WTC11 (cell line): ENCODE measurements at regions of chr2 and their contacts with region 1.

Region 1: GRCh38 chr2:177212106-177212890 is at the start of gene HNRNPA3:
- DNase-seq: peak; percentile 99
- ATAC-seq: peak; percentile 91
- H3K4me3 Mint-ChIP-seq: peak within 1 kb of the TSS; percentile 99
- H3K27ac Mint-ChIP-seq: peak within 1 kb of the TSS; percentile 100
- H3K4me1 Mint-ChIP-seq: peaks cover 53% of the 10 kb centered on the region
- H3K27me3 Mint-ChIP-seq: peaks cover 2% of the 10 kb centered on the region; the same call in 1 of the 2 replicates
- CTCF ChIP-seq: no peak
- total RNA-seq, gene HNRNPA3: 367 to 406 TPM (median 379 TPM) in 3 replicates

Region 2: DNA sequence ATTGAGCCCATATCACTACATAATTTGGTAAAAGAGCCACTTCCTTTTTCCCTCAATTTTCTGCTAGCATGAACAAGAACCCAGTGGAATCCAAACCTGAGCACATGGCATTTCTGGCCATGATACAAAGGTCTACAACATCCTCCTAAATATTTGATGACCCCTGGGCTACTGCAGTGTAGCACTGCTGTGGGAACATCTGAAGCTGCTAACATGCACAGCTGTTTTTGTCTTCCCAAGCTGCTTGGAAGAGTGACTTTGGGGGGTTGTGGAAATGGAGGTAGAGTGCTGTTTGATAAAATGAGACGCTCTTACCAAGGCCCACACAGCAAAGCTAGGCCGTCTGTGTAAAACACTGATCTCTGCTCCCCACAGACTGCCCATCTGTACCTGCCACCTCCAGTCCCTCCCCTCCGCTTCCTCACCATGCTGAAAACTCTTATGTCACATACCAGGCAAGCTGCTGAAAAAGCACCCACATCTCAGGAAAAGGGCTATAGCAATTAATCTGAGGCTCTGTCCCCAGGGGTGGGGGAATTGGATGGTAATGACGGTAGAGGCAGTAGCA is 196.9 kb before region 1 on chr2:
- CTCF ChIA-PET with region 1: no interaction called
- POLR2A ChIA-PET with region 1: no interaction called
- DNase-seq: no peak
- ATAC-seq: no peak
- H3K4me3 Mint-ChIP-seq: no peak overlapping the region
- H3K27ac Mint-ChIP-seq: no peak overlapping the region
- H3K4me1 Mint-ChIP-seq: no peaks in the 10 kb centered on the region
- H3K27me3 Mint-ChIP-seq: no peaks in the 10 kb centered on the region
- CTCF ChIP-seq: no peak

Region 3: DNA sequence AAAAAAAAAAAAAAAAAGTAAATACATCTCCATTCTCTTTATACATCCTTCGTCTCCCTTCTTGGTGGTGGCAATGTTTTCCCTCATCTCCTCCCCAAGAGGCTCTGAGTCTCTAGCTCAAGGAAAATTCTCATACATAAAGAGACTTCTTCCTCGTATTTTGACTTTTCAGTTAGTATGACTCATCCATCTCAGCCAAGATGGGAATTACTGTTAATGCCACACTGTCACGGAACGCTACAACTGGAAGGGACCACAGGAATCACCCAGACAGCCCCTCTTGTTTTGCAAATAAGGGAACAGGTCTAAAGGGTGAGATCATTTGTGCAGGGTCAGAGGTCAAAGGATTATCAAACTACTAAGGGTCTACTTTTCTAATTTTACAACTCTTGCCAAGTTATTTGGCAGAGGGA is 32.7 kb after region 1 on chr2:
- CTCF ChIA-PET with region 1: no interaction called
- POLR2A ChIA-PET with region 1: no interaction called
- DNase-seq: no peak
- ATAC-seq: peak; percentile 76
- H3K4me3 Mint-ChIP-seq: no peak overlapping the region
- H3K27ac Mint-ChIP-seq: peak overlapping the region; percentile 84
- H3K4me1 Mint-ChIP-seq: peaks cover 55% of the 10 kb centered on the region
- H3K27me3 Mint-ChIP-seq: no peaks in the 10 kb centered on the region
- CTCF ChIP-seq: no peak

Region 4: GRCh38 chr2:177263451-177264208 is 51.3 kb after region 1 on chr2:
- CTCF ChIA-PET with region 1: interaction called, 3 read pairs
- POLR2A ChIA-PET with region 1: interaction called, 14 read pairs
- DNase-seq: peak; percentile 84
- ATAC-seq: peak; percentile 66
- H3K4me3 Mint-ChIP-seq: peak overlapping the region; percentile 84
- H3K27ac Mint-ChIP-seq: peak overlapping the region; percentile 95
- H3K4me1 Mint-ChIP-seq: peaks cover 38% of the 10 kb centered on the region
- H3K27me3 Mint-ChIP-seq: no peaks in the 10 kb centered on the region
- CTCF ChIP-seq: 0 out of 2 replicates have a peak, but pooled peaks have one; percentile 13